T-cell (primary cell): ENCODE measurements at regions of chr10 and their contacts with region 1.

Region 1: DNA sequence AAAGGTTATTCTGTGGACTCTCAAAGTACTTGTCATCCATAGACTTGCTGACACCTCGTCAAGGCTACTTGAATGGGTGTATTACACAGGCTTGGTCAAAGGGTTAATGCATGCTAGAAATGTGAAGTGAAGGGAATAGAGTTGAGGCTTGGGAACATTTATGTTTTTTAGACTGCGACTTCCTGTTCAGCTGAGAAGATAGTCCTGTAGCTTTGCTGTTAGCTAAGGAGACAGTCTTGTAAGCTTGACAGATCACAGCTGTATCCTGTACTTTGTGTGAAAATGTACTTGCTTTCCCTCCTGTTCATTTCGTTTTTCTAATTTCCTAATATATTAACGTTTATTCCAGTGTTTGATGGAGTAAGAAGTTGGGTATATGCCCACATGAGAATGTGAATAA is 52.1 kb downstream of the ADD3 start:
- DNase-seq: no peak
- ATAC-seq: peak in 3 of 4 experiments; percentile 53 to 64 (median 58)
- H3K4me3 ChIP-seq: no peak overlapping the region
- H3K4me3 Mint-ChIP-seq: peak overlapping the region; percentile 15 to 86 (median 22)
- H3K27ac ChIP-seq: peak overlapping the region; percentile 5
- H3K27ac Mint-ChIP-seq: peak overlapping the region; percentile 76 to 79
- H3K4me1 ChIP-seq: peaks cover 22 to 61% of the 10 kb centered on the region in 2 experiments
- H3K4me1 Mint-ChIP-seq: peaks cover 88 to 93% (median 89%) of the 10 kb centered on the region in 3 donors
- H3K27me3 ChIP-seq: no peaks in the 10 kb centered on the region
- H3K27me3 Mint-ChIP-seq: no peaks in the 10 kb centered on the region

Region 2: GRCh38 chr10:109062371-109062770 is 997.6 kb before region 1 on chr10:
- CTCF ChIA-PET with region 1: no interaction called
- POLR2A ChIA-PET with region 1: no interaction called
- DNase-seq: no peak
- ATAC-seq: no peak
- H3K4me3 ChIP-seq: no peak overlapping the region
- H3K4me3 Mint-ChIP-seq: no peak overlapping the region
- H3K27ac ChIP-seq: no peak overlapping the region
- H3K27ac Mint-ChIP-seq: no peak overlapping the region
- H3K4me1 ChIP-seq: no peaks in the 10 kb centered on the region
- H3K4me1 Mint-ChIP-seq: no peaks in the 10 kb centered on the region
- H3K27me3 ChIP-seq: no peaks in the 10 kb centered on the region
- H3K27me3 Mint-ChIP-seq: no peaks in the 10 kb centered on the region

Region 3: GRCh38 chr10:109966961-109967738 is 92.8 kb before region 1 on chr10:
- CTCF ChIA-PET with region 1: no interaction called
- POLR2A ChIA-PET with region 1: no interaction called
- DNase-seq: no peak
- ATAC-seq: no peak
- H3K4me3 ChIP-seq: no peak overlapping the region
- H3K4me3 Mint-ChIP-seq: no peak overlapping the region
- H3K27ac ChIP-seq: no peak overlapping the region
- H3K27ac Mint-ChIP-seq: no peak overlapping the region
- H3K4me1 ChIP-seq: no peaks in the 10 kb centered on the region
- H3K4me1 Mint-ChIP-seq: peaks cover 0 to 2% (median 0%) of the 10 kb centered on the region in 3 donors
- H3K27me3 ChIP-seq: peaks cover 0 to 2% of the 10 kb centered on the region in 2 experiments
- H3K27me3 Mint-ChIP-seq: peaks cover 3 to 4% of the 10 kb centered on the region in 2 donors

Region 4: GRCh38 chr10:110110338-110110737 is 50.4 kb after region 1 on chr10:
- CTCF ChIA-PET with region 1: no interaction called
- POLR2A ChIA-PET with region 1: interaction called in 1 of 2 experiments, 12 read pairs
- DNase-seq: no peak
- ATAC-seq: no peak
- H3K4me3 ChIP-seq: no peak overlapping the region
- H3K4me3 Mint-ChIP-seq: no peak overlapping the region
- H3K27ac ChIP-seq: peak overlapping the region; percentile 1
- H3K27ac Mint-ChIP-seq: peak overlapping the region; percentile 73 to 84
- H3K4me1 ChIP-seq: peaks cover 0 to 2% of the 10 kb centered on the region in 2 experiments
- H3K4me1 Mint-ChIP-seq: peaks cover 39 to 47% (median 40%) of the 10 kb centered on the region in 3 donors
- H3K27me3 ChIP-seq: no peaks in the 10 kb centered on the region
- H3K27me3 Mint-ChIP-seq: no peaks in the 10 kb centered on the region